Caco-2 (cell line): ENCODE measurements at regions of chr13 and their contacts with region 1.

Region 1: DNA sequence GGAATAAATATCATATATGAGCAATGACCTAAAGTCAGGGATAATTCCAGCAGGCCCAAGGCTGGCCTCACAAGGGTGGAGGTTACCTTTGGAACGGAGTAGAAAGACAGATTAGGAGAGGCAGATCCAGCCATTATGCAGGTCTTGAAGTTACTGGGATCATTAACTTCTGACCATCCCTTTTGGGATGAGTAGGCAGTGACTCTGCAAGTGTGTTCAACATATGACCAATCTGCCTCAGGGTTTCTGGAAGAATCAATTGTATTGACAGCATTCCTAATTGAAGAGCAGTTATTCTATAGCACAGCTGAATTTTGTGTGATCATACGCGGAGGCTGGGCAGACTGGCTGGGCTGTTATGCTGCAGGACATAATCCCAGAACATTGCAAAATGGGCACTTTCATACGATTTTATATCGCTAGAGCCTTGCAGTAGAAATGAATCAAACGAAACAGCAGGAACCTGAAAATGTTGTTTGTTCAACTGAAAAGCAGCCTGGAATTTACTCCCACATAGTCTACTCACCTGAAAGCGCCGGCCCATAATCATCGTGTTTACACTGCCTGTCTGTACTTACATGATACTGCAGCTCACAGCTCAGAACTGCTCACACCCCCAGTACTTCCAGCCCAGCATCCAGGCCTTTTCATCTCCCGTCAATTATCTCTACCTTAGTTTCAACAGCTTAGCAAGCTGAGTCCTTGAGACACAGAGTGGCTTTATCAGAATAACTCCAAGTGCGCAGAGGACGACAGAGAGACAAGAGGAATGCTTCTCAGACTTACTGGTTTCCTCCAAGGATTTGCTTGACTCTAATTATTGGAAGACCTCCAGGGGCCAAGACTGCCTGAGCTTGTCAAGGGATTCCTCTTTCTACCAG is 556.1 kb downstream of the EFNB2 start:
- DNase-seq: peak; percentile 87 to 95
- H3K4me3 ChIP-seq: peak overlapping the region; percentile 9
- H3K4me3 Mint-ChIP-seq: peak overlapping the region; percentile 57
- H3K27ac Mint-ChIP-seq: peak overlapping the region; percentile 82
- H3K4me1 ChIP-seq: peaks cover 40% of the 10 kb centered on the region
- H3K4me1 Mint-ChIP-seq: peaks cover 38% of the 10 kb centered on the region
- H3K27me3 ChIP-seq: no peaks in the 10 kb centered on the region
- H3K27me3 Mint-ChIP-seq: no peaks in the 10 kb centered on the region
- CTCF ChIP-seq: no peak

Region 2: GRCh38 chr13:105773863-105774538 is 205.4 kb before region 1 on chr13:
- CTCF ChIA-PET with region 1: no interaction called
- POLR2A ChIA-PET with region 1: no interaction called
- intact Hi-C with region 1: loop called (anchors 1 kb)
- DNase-seq: peak; percentile 8 to 38
- H3K4me3 ChIP-seq: no peak overlapping the region
- H3K4me3 Mint-ChIP-seq: peak overlapping the region; percentile 44
- H3K27ac Mint-ChIP-seq: peak overlapping the region; percentile 39
- H3K4me1 ChIP-seq: peaks cover 38% of the 10 kb centered on the region
- H3K4me1 Mint-ChIP-seq: peaks cover 33% of the 10 kb centered on the region
- H3K27me3 ChIP-seq: no peaks in the 10 kb centered on the region
- H3K27me3 Mint-ChIP-seq: no peaks in the 10 kb centered on the region
- CTCF ChIP-seq: no peak

Region 3: GRCh38 chr13:105804561-105805190 is 174.7 kb before region 1 on chr13:
- CTCF ChIA-PET with region 1: no interaction called
- POLR2A ChIA-PET with region 1: no interaction called
- intact Hi-C with region 1: no loop called
- DNase-seq: no peak
- H3K4me3 ChIP-seq: no peak overlapping the region
- H3K4me3 Mint-ChIP-seq: no peak overlapping the region
- H3K27ac Mint-ChIP-seq: no peak overlapping the region
- H3K4me1 ChIP-seq: no peaks in the 10 kb centered on the region
- H3K4me1 Mint-ChIP-seq: no peaks in the 10 kb centered on the region
- H3K27me3 ChIP-seq: no peaks in the 10 kb centered on the region
- H3K27me3 Mint-ChIP-seq: no peaks in the 10 kb centered on the region
- CTCF ChIP-seq: no peak

Region 4: GRCh38 chr13:105817021-105817420 is 162.3 kb before region 1 on chr13:
- CTCF ChIA-PET with region 1: no interaction called
- POLR2A ChIA-PET with region 1: no interaction called
- intact Hi-C with region 1: loop called (anchors 2 kb)
- DNase-seq: peak; percentile 62 to 75
- H3K4me3 ChIP-seq: no peak overlapping the region
- H3K4me3 Mint-ChIP-seq: peak overlapping the region; percentile 38
- H3K27ac Mint-ChIP-seq: peak overlapping the region; percentile 97
- H3K4me1 ChIP-seq: peaks cover 28% of the 10 kb centered on the region
- H3K4me1 Mint-ChIP-seq: peaks cover 23% of the 10 kb centered on the region
- H3K27me3 ChIP-seq: no peaks in the 10 kb centered on the region
- H3K27me3 Mint-ChIP-seq: no peaks in the 10 kb centered on the region
- CTCF ChIP-seq: no peak

Region 5: DNA sequence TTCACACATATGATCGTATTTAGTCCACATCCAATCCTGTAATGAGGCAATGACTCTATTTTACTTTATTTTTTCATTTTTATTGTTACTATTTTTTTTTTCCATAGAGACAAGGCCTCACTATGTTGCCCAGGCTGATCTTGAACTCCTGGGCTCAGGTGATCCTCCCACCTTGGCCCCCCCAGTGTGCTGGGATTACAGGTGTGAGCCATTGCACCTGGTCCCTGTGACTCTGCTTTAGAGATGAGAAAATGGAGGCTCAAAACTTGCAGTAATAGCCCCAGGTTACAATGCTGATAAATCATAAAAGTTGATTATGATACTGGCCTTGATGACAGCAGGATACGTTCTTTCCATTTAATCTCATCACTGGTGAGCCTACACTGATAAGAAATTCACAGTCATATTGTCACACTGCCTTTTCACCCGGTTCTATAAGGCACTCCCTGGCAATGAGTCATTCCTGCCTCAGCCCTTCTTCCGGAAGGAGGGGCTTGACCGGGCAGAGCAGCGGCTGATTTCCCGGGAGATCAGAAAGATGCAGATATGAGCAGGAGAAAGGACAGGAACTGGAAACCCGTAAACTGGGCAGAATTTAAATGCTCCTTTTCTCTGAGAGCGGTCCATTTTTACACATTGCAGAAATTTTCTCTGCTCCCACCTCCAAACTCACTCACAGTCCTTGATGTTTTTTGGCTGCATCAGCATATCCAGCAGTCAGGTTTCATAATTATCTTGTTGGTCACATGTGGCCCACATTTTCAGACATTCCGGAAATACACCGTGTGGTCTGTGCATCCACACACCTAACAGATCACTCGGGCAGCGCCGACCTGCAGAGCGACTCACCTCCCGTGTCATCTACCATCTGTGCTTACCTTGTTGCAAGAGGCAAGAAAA is 60.3 kb before region 1 on chr13:
- CTCF ChIA-PET with region 1: no interaction called
- POLR2A ChIA-PET with region 1: no interaction called
- intact Hi-C with region 1: loop called (anchors 1 kb)
- DNase-seq: peak; percentile 80 to 89
- H3K4me3 ChIP-seq: peak overlapping the region; percentile 27
- H3K4me3 Mint-ChIP-seq: peak overlapping the region; percentile 77
- H3K27ac Mint-ChIP-seq: peak overlapping the region; percentile 86
- H3K4me1 ChIP-seq: peaks cover 27% of the 10 kb centered on the region
- H3K4me1 Mint-ChIP-seq: peaks cover 16% of the 10 kb centered on the region
- H3K27me3 ChIP-seq: no peaks in the 10 kb centered on the region
- H3K27me3 Mint-ChIP-seq: no peaks in the 10 kb centered on the region
- CTCF ChIP-seq: no peak

Region 6: GRCh38 chr13:105929505-105929904 is 49.9 kb before region 1 on chr13:
- CTCF ChIA-PET with region 1: no interaction called
- POLR2A ChIA-PET with region 1: no interaction called
- intact Hi-C with region 1: no loop called
- DNase-seq: no peak
- H3K4me3 ChIP-seq: no peak overlapping the region
- H3K4me3 Mint-ChIP-seq: no peak overlapping the region
- H3K27ac Mint-ChIP-seq: no peak overlapping the region
- H3K4me1 ChIP-seq: no peaks in the 10 kb centered on the region
- H3K4me1 Mint-ChIP-seq: peaks cover 6% of the 10 kb centered on the region
- H3K27me3 ChIP-seq: no peaks in the 10 kb centered on the region
- H3K27me3 Mint-ChIP-seq: no peaks in the 10 kb centered on the region
- CTCF ChIP-seq: no peak

Region 7: GRCh38 chr13:106072014-106072413 is 92.6 kb after region 1 on chr13:
- CTCF ChIA-PET with region 1: no interaction called
- POLR2A ChIA-PET with region 1: no interaction called
- intact Hi-C with region 1: loop called (anchors 2 kb)
- DNase-seq: no peak
- H3K4me3 ChIP-seq: no peak overlapping the region
- H3K4me3 Mint-ChIP-seq: no peak overlapping the region
- H3K27ac Mint-ChIP-seq: no peak overlapping the region
- H3K4me1 ChIP-seq: peaks cover 13% of the 10 kb centered on the region
- H3K4me1 Mint-ChIP-seq: peaks cover 9% of the 10 kb centered on the region
- H3K27me3 ChIP-seq: no peaks in the 10 kb centered on the region
- H3K27me3 Mint-ChIP-seq: no peaks in the 10 kb centered on the region
- CTCF ChIP-seq: no peak

Region 8: GRCh38 chr13:106078191-106078590 is 98.8 kb after region 1 on chr13:
- CTCF ChIA-PET with region 1: no interaction called
- POLR2A ChIA-PET with region 1: no interaction called
- intact Hi-C with region 1: loop called (anchors 1 kb)
- DNase-seq: peak; percentile 53 to 64
- H3K4me3 ChIP-seq: no peak overlapping the region
- H3K4me3 Mint-ChIP-seq: peak overlapping the region; percentile 58
- H3K27ac Mint-ChIP-seq: peak overlapping the region; percentile 84
- H3K4me1 ChIP-seq: peaks cover 30% of the 10 kb centered on the region
- H3K4me1 Mint-ChIP-seq: peaks cover 31% of the 10 kb centered on the region
- H3K27me3 ChIP-seq: no peaks in the 10 kb centered on the region
- H3K27me3 Mint-ChIP-seq: no peaks in the 10 kb centered on the region
- CTCF ChIP-seq: no peak

Region 9: GRCh38 chr13:106530171-106530851 is 550.9 kb after region 1 on chr13:
- CTCF ChIA-PET with region 1: no interaction called
- POLR2A ChIA-PET with region 1: no interaction called
- intact Hi-C with region 1: loop called (anchors 1 kb)
- DNase-seq: no peak
- H3K4me3 ChIP-seq: no peak overlapping the region
- H3K4me3 Mint-ChIP-seq: peak overlapping the region; percentile 97
- H3K27ac Mint-ChIP-seq: peak overlapping the region; percentile 67
- H3K4me1 ChIP-seq: peaks cover 58% of the 10 kb centered on the region
- H3K4me1 Mint-ChIP-seq: peaks cover 62% of the 10 kb centered on the region
- H3K27me3 ChIP-seq: no peaks in the 10 kb centered on the region
- H3K27me3 Mint-ChIP-seq: no peaks in the 10 kb centered on the region
- CTCF ChIP-seq: no peak